ENCODE measurements at regions of chr2 and their contacts with region 1.

Region 1: GRCh38 chr2:162221064-162221463 is 22.2 kb downstream of the FAP start:
- DNase-seq: peak in 1 of 2 experiments; percentile 41
- H3K4me3 ChIP-seq: no peak overlapping the region
- H3K27ac ChIP-seq: no peak overlapping the region
- H3K4me1 ChIP-seq: no peaks in the 10 kb centered on the region
- H3K27me3 ChIP-seq: no peaks in the 10 kb centered on the region
- CTCF ChIP-seq: peak; percentile 66

Region 2: DNA sequence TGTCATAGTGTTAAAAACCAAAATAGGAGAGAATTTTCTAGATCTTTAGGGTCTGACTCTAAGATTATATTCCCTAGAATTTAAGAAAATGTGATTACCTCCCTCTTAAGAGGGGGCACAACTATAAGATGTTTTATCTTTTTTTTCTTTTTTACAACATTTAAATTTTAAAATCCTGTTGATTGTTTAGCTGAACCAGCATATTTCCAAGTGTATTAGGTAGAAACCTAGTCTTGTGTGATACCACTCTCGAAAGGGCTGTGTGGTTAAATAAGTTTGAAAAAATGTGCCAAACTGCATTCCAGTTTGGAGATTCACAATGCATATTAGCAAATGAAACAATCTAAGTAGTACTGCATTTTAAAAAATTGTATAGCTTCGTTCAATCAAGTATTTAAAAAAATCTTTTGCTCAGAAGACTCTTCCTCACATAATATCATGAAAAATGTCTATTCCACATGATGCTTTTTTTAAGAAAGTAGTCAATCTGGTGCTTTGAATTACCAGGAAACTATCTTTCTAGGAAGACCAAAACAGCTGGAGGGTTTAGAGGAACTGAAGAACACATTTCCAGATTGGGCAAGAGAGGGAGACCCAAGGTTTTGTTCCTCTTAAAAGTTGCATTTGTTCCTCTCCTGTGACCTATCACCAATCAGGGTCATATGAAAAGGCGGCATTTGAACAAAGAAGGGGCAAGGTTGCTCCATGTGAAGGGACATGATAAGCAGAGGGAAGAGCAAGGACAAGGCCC is 245.8 kb before region 1 on chr2:
- CTCF ChIA-PET with region 1: no interaction called
- POLR2A ChIA-PET with region 1: no interaction called
- intact Hi-C with region 1: no loop called
- DNase-seq: no peak
- H3K4me3 ChIP-seq: no peak overlapping the region
- H3K27ac ChIP-seq: no peak overlapping the region
- H3K4me1 ChIP-seq: no peaks in the 10 kb centered on the region
- H3K27me3 ChIP-seq: no peaks in the 10 kb centered on the region
- CTCF ChIP-seq: no peak

Region 3: DNA sequence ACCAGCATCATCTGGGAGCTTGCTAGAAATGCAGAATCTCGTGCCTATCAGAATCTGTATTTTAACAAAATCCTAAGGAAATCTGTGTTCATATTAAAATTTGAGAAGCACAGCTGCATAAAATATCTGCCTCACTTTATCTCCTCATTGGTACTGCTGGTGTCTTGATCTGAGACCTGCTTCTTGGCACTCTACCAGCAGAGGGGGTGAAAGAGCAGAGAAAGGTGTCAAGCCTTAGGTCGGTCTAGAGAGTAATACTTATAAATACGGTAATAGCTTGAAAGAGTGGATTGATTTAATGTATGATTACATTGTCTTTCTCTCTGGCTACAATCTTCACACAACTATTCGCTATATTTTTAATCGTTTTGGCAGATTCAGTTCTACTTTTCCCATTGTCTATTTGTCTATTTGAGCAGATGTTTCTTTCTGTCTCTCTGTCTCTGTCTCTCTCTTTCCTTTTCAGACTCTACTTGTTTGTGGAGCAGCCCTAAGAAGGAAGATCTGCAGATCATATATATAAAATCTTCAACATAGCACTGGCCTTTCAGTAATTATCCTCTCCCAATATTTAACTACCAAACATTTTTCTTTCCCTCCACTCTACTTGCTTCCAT is 67.3 kb before region 1 on chr2:
- CTCF ChIA-PET with region 1: interaction called, 4 read pairs
- POLR2A ChIA-PET with region 1: no interaction called
- intact Hi-C with region 1: loop called (anchors 5 kb)
- DNase-seq: peak in 1 of 2 experiments; percentile 40
- H3K4me3 ChIP-seq: no peak overlapping the region
- H3K27ac ChIP-seq: no peak overlapping the region
- H3K4me1 ChIP-seq: no peaks in the 10 kb centered on the region
- H3K27me3 ChIP-seq: no peaks in the 10 kb centered on the region
- CTCF ChIP-seq: peak; percentile 73

Region 4: GRCh38 chr2:162244541-162245031 is 23.5 kb after region 1 on chr2:
- CTCF ChIA-PET with region 1: no interaction called
- POLR2A ChIA-PET with region 1: no interaction called
- intact Hi-C with region 1: loop called (anchors 1 kb)
- DNase-seq: peak; percentile 67 to 87
- H3K4me3 ChIP-seq: no peak overlapping the region
- H3K27ac ChIP-seq: peak overlapping the region; percentile 89
- H3K4me1 ChIP-seq: peaks cover 29% of the 10 kb centered on the region
- H3K27me3 ChIP-seq: no peaks in the 10 kb centered on the region
- CTCF ChIP-seq: no peak